Activated B cell treated with CpG ODN at 0.5 μM for 24 hours (primary cell): ENCODE measurements at regions of chr10 and their contacts with region 1.

Region 1: DNA sequence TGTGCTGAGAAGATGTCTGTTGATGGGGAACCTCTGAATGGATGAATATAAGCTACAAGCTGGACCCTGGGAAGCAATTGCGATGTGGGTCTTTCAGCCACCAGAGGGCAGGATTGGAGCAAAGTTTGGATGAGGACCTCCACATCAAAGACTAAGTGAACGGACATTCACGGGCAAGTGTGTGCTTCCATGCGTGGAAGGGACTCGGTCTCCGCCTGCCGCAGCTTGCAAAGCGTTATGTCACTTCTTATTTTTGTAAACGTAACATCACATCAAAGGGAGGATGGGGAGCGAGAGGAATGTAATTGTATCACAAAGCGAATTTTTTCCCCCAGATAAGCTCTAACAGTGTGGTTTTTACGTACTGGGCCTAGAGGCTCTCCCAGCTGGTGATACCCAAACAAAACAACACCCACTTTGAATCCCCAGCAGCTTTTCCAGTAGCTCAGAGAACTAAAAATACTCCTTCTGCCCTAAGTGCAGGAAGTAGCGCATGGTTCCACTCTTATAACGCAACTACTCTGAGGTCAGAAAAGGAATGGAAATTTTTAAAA is 65.0 kb downstream of the VWA2 start:
- DNase-seq: peak; percentile 46
- ATAC-seq: peak; percentile 53
- H3K4me3 Mint-ChIP-seq: peak overlapping the region; percentile 86
- H3K27ac Mint-ChIP-seq: peak overlapping the region; percentile 47
- H3K4me1 Mint-ChIP-seq: peaks cover 12% of the 10 kb centered on the region
- H3K27me3 Mint-ChIP-seq: no peaks in the 10 kb centered on the region
- CTCF ChIP-seq: peak; percentile 15

Region 2: DNA sequence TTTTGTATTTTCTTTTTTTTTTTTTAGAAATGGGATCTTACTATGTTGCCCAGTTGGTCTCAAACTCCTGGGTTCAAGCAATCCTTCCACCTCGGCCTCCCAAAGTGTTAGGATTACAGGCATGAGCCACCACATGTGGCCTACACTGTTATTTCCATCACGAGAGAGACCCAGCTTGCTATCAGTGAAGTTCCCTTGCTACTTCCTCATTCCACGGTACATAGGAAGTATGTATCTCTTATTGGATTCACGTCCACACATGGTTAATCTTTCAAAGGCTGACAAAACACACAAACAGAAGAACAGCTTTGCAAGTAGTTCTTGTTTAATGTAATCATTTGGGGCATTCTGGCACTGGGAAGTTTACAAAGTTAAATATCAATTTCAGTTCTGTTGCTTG is 501.1 kb before region 1 on chr10:
- CTCF ChIA-PET with region 1: interaction called, 4 read pairs
- POLR2A ChIA-PET with region 1: no interaction called
- intact Hi-C with region 1: loop called (anchors 1 kb)
- DNase-seq: no peak
- ATAC-seq: no peak
- H3K4me3 Mint-ChIP-seq: no peak overlapping the region
- H3K27ac Mint-ChIP-seq: no peak overlapping the region
- H3K4me1 Mint-ChIP-seq: peaks cover 7% of the 10 kb centered on the region
- H3K27me3 Mint-ChIP-seq: peaks cover 3% of the 10 kb centered on the region
- CTCF ChIP-seq: no peak

Region 3: GRCh38 chr10:114550756-114551635 is 246.9 kb after region 1 on chr10:
- CTCF ChIA-PET with region 1: interaction called, 7 read pairs
- POLR2A ChIA-PET with region 1: no interaction called
- intact Hi-C with region 1: loop called (anchors 1 kb)
- DNase-seq: no peak
- ATAC-seq: no peak
- H3K4me3 Mint-ChIP-seq: no peak overlapping the region
- H3K27ac Mint-ChIP-seq: no peak overlapping the region
- H3K4me1 Mint-ChIP-seq: peaks cover 16% of the 10 kb centered on the region
- H3K27me3 Mint-ChIP-seq: no peaks in the 10 kb centered on the region
- CTCF ChIP-seq: no peak

Region 4: DNA sequence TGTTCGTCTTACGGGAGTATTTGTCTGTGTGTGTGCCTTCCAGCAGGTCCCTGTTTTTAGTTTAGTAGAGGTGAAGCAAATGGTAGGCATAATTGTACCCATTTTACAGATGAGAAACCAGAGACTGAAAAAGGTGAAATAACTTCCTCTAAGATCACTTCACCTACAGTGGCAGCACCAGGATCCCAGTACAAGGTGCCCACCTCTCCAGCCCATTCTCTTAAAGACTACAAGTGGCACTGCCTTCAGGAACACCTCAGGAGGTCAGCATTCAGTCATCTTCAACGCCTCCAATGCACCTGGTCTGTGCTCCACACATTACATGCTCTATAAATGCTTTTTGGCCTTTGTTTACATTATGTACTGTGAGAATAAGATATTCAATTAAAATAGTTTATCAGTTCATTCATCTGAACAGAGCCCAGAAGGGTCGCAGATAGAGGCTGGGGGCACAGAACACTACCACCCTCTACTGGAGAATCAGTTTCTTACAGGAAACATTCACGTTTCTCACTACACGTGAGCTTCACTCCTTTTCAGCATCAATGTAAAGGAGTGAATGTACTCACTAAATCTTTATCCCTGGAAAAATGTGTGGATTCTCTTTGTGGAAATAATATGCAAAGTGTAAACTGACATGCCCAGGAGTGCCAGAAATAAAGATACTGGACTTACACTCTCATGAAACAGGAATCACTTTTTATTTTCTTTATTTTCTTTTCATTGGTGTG is 399.4 kb after region 1 on chr10:
- CTCF ChIA-PET with region 1: interaction called, 37 read pairs
- POLR2A ChIA-PET with region 1: no interaction called
- intact Hi-C with region 1: loop called (anchors 1 kb)
- DNase-seq: no peak
- ATAC-seq: peak; percentile 52
- H3K4me3 Mint-ChIP-seq: no peak overlapping the region
- H3K27ac Mint-ChIP-seq: no peak overlapping the region
- H3K4me1 Mint-ChIP-seq: no peaks in the 10 kb centered on the region
- H3K27me3 Mint-ChIP-seq: no peaks in the 10 kb centered on the region
- CTCF ChIP-seq: no peak

Region 5: GRCh38 chr10:114821293-114821914 is 517.3 kb after region 1 on chr10 and contains the start of gene FHIP2A:
- CTCF ChIA-PET with region 1: interaction called, 11 read pairs
- POLR2A ChIA-PET with region 1: no interaction called
- intact Hi-C with region 1: no loop called
- DNase-seq: peak; percentile 95
- ATAC-seq: peak; percentile 93
- H3K4me3 Mint-ChIP-seq: peak within 1 kb of the TSS; percentile 91
- H3K27ac Mint-ChIP-seq: peak within 1 kb of the TSS; percentile 90
- H3K4me1 Mint-ChIP-seq: peaks cover 27% of the 10 kb centered on the region
- H3K27me3 Mint-ChIP-seq: no peaks in the 10 kb centered on the region
- CTCF ChIP-seq: no peak
- total RNA-seq, gene FHIP2A: 16.5 and 20.2 TPM in 2 replicates

Region 6: DNA sequence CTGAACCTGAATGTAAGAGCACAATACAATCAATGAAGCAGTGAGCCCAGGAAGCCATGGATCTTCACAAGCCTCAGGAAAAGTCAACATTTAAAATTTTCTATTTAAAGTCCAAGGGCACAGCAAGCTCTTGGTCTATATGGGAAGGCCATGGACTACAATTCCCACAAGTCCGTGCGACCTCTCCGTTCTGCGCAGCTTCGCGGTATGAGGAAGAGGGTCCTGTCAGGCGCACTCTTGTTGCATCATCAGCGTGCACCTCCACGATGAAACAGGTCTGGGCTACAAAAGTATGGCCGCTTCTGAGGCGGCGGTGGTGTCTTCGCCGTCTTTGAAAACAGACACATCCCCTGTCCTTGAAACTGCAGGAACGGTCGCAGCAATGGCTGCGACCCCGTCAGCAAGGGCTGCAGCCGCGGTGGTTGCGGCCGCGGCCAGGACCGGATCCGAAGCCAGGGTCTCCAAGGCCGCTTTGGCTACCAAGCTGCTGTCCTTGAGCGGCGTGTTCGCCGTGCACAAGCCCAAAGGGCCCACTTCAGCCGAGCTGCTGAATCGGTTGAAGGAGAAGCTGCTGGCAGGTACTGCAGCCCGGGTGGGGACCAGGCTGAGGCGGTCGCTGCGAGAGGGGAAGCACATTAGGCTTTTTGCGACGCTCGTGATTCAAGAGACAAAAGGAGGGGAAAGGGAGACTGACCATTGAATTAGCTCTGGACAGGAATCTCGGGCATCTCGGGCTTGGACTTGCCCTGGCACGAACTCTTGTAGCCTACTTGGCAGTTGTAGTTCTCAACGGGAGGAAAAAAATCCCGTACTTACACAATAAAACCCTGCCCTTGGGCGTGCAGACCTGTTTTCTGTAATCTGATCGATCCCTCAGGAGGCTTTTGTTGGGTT is 634.1 kb after region 1 on chr10 and contains the start of gene TRUB1:
- CTCF ChIA-PET with region 1: no interaction called
- POLR2A ChIA-PET with region 1: no interaction called
- intact Hi-C with region 1: loop called (anchors 2 kb)
- DNase-seq: peak; percentile 72
- ATAC-seq: peak; percentile 100
- H3K4me3 Mint-ChIP-seq: peak within 1 kb of the TSS; percentile 97
- H3K27ac Mint-ChIP-seq: peak within 1 kb of the TSS; percentile 95
- H3K4me1 Mint-ChIP-seq: peaks cover 24% of the 10 kb centered on the region
- H3K27me3 Mint-ChIP-seq: peaks cover 2% of the 10 kb centered on the region
- CTCF ChIP-seq: no peak
- total RNA-seq, gene TRUB1: 13.0 and 13.9 TPM in 2 replicates